T-cell (primary cell): ENCODE measurements at regions of chr14 and their contacts with region 1.

Region 1: GRCh38 chr14:23076785-23077408 is 18.0 kb downstream of the ACIN1 start:
- DNase-seq: peak in 5 of 35 experiments; percentile 32 to 67 (median 35)
- ATAC-seq: peak in 3 of 4 experiments; percentile 63 to 75 (median 67)
- H3K4me3 ChIP-seq: no peak overlapping the region
- H3K4me3 Mint-ChIP-seq: no peak overlapping the region
- H3K27ac ChIP-seq: no peak overlapping the region
- H3K27ac Mint-ChIP-seq: peak overlapping the region in 1 of 2 donors; percentile 34
- H3K4me1 ChIP-seq: peaks cover 1 to 4% of the 10 kb centered on the region in 2 experiments
- H3K4me1 Mint-ChIP-seq: peaks cover 10 to 15% (median 11%) of the 10 kb centered on the region in 3 donors
- H3K27me3 ChIP-seq: no peaks in the 10 kb centered on the region
- H3K27me3 Mint-ChIP-seq: no peaks in the 10 kb centered on the region

Region 2: DNA sequence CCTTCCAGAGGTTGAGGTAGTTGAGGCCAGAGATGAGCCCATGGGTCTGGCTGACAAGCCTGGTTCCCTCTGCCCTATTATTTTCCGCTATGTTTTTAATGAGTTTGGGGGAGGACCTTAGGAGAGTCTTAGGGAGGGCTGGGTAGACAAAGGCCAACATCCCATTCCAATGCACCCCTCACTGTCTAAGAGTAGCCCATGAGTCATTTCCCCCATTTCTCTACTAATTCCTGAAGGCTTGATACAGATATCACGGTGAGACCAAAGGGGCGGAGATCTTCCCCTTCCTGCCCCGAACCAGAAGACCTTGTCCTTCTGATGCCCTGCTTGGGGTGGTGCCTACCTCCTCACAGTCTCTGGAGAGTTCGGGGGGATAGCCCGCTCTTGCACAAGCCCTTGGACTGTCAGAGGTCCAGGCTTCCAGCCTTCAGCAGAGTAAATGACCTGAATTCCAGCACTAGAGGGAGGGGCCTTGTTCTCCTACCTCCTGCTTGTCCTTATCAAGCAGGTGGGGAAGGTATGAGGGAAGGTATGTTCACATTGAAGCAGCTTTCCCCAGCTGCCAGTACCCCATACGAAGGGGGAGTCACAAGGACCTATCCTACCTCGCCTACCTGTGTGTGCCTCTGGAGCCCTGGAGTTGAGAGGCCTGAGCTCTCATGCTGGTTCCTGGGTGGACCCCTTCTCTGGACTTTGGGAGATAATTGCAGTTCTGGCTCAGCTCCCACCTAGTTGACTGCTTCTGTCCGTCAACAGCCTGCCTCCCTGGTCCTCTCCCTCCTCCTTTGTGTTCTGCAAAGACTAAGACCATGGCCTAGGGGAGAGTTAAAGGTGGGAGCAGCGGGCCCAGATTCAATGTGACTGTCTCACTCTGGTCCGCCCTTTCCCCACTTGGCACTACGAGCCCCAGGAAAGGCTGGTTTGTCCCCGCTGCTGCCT is 31.2 kb before region 1 on chr14:
- CTCF ChIA-PET with region 1: no interaction called
- POLR2A ChIA-PET with region 1: no interaction called
- DNase-seq: no peak
- ATAC-seq: no peak
- H3K4me3 ChIP-seq: no peak overlapping the region
- H3K4me3 Mint-ChIP-seq: no peak overlapping the region
- H3K27ac ChIP-seq: no peak overlapping the region
- H3K27ac Mint-ChIP-seq: no peak overlapping the region
- H3K4me1 ChIP-seq: no peaks in the 10 kb centered on the region
- H3K4me1 Mint-ChIP-seq: no peaks in the 10 kb centered on the region
- H3K27me3 ChIP-seq: peaks cover 0 to 10% of the 10 kb centered on the region in 2 experiments
- H3K27me3 Mint-ChIP-seq: peaks cover 0 to 3% of the 10 kb centered on the region in 2 donors

Region 3: GRCh38 chr14:23120541-23121251 is 43.8 kb after region 1 on chr14:
- CTCF ChIA-PET with region 1: interaction called in 1 of 2 experiments, 12 read pairs
- POLR2A ChIA-PET with region 1: no interaction called
- DNase-seq: peak; percentile 33 to 88 (median 61)
- ATAC-seq: peak; percentile 58 to 71 (median 64)
- H3K4me3 ChIP-seq: peak overlapping the region; percentile 10 to 36
- H3K4me3 Mint-ChIP-seq: peak overlapping the region; percentile 52 to 81 (median 56)
- H3K27ac ChIP-seq: peak overlapping the region; percentile 77
- H3K27ac Mint-ChIP-seq: peak overlapping the region; percentile 96 to 99
- H3K4me1 ChIP-seq: peaks cover 32 to 53% of the 10 kb centered on the region in 2 experiments
- H3K4me1 Mint-ChIP-seq: peaks cover 55 to 58% (median 57%) of the 10 kb centered on the region in 3 donors
- H3K27me3 ChIP-seq: peaks cover 0 to 4% of the 10 kb centered on the region in 2 experiments
- H3K27me3 Mint-ChIP-seq: peaks cover 0 to 3% of the 10 kb centered on the region in 2 donors

Region 4: DNA sequence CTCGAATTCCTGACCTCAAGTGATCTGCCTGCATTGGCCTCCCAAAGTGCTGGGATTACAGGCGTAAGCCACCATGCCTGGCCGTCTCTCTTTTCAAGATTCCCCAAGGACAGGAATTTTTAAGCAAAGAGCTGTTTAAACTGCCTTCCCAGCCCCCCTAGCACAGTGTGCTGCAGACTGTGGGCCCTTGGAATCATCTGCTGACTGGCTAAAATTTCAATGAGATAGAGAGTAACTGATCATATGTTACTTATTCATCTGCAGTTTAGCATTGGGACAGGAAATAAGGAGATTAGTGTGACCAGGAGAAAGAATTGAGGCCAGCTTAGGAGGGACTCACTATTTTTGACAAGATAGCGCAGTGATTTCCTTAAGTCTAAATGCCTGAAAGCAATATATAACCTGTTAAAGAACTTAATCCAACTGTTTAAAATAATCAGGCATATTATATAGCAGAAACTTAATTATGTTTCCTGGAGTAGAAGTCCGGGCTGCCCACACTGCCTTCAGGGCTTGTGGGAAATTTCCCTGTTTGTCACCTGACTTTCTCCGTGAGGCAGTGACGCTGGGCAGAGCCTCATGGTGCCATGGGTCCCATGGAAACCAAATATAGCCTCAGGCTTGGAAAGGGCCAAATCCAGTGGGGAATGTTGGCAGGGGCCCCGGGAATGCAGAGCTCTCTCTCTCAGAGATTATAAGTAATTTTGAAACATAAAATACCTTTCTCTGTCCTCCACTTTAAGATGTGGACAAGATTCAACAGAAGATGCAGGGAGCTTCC is 65.0 kb after region 1 on chr14:
- CTCF ChIA-PET with region 1: no interaction called
- POLR2A ChIA-PET with region 1: no interaction called
- DNase-seq: no peak
- ATAC-seq: no peak
- H3K4me3 ChIP-seq: no peak overlapping the region
- H3K4me3 Mint-ChIP-seq: no peak overlapping the region
- H3K27ac ChIP-seq: no peak overlapping the region
- H3K27ac Mint-ChIP-seq: no peak overlapping the region
- H3K4me1 ChIP-seq: no peaks in the 10 kb centered on the region
- H3K4me1 Mint-ChIP-seq: no peaks in the 10 kb centered on the region
- H3K27me3 ChIP-seq: peaks cover 0 to 14% of the 10 kb centered on the region in 2 experiments
- H3K27me3 Mint-ChIP-seq: peaks cover 2 to 7% of the 10 kb centered on the region in 2 donors

Region 5: DNA sequence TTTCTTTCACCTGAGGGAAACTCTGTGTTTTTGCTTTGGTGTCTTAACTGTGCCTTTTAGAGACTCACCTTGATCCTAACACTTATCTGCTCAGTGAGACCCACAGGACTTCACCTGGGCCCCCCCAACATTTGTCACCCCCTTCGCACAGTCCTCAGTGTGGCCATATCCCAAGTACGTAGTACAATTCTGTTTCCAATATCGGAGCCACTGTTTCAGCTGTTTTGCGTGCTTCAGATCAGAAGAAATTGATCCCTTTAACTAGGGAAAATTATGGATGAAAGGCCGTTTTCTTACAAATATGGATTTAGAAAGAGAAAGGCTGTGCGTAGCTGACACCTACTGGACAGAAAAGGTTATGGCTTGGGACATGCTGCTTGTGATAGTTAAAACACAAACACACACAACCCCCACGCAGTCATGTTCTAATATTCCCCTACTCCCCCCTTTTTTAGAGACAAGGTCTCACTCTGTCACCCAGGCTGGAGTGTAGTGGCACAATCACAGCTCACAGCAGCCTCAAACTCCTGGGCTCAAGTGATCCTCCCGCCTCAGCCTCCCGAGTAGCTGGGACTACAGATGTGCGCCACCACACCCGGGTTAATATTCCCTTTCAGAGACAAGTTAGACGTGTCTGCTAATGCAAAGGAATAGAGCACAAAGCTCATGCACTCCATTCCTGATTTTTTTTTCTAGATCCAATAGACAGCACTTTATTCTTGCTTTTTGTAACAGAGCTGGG is 110.2 kb after region 1 on chr14:
- CTCF ChIA-PET with region 1: interaction called, 6 to 12 read pairs
- POLR2A ChIA-PET with region 1: interaction called in 1 of 2 experiments, 3 read pairs
- DNase-seq: peak in 14 of 35 experiments; percentile 6 to 65 (median 15)
- ATAC-seq: peak in 3 of 4 experiments; percentile 43 to 62 (median 44)
- H3K4me3 ChIP-seq: no peak overlapping the region
- H3K4me3 Mint-ChIP-seq: no peak overlapping the region
- H3K27ac ChIP-seq: no peak overlapping the region
- H3K27ac Mint-ChIP-seq: peak overlapping the region in 1 of 2 donors; percentile 35
- H3K4me1 ChIP-seq: peaks cover 11 to 12% of the 10 kb centered on the region in 2 experiments
- H3K4me1 Mint-ChIP-seq: peaks cover 0 to 5% (median 2%) of the 10 kb centered on the region in 3 donors
- H3K27me3 ChIP-seq: peaks cover 0 to 8% of the 10 kb centered on the region in 2 experiments
- H3K27me3 Mint-ChIP-seq: no peaks in the 10 kb centered on the region